AG04450 (cell line): ENCODE measurements at regions of chr5 and their contacts with region 1.

Region 1: GRCh38 chr5:126656396-126657007 is 55.8 kb downstream of the PHAX start:
- DNase-seq: peak; percentile 18
- H3K4me3 ChIP-seq: no peak overlapping the region
- H3K27ac ChIP-seq: no peak overlapping the region
- H3K27me3 ChIP-seq: no peaks in the 10 kb centered on the region
- CTCF ChIP-seq: peak; percentile 96

Region 2: GRCh38 chr5:126801992-126802294 is 145.4 kb after region 1 on chr5:
- CTCF ChIA-PET with region 1: interaction called, 59 read pairs
- POLR2A ChIA-PET with region 1: no interaction called
- DNase-seq: no peak
- H3K4me3 ChIP-seq: no peak overlapping the region
- H3K27ac ChIP-seq: no peak overlapping the region
- H3K27me3 ChIP-seq: no peaks in the 10 kb centered on the region
- CTCF ChIP-seq: peak; percentile 59

Region 3: GRCh38 chr5:126808521-126808988 is 152.1 kb after region 1 on chr5:
- CTCF ChIA-PET with region 1: interaction called, 59 read pairs
- POLR2A ChIA-PET with region 1: no interaction called
- DNase-seq: no peak
- H3K4me3 ChIP-seq: no peak overlapping the region
- H3K27ac ChIP-seq: no peak overlapping the region
- H3K27me3 ChIP-seq: no peaks in the 10 kb centered on the region
- CTCF ChIP-seq: peak; percentile 60